CD8-positive, alpha-beta T cell (primary cell): ENCODE measurements at regions of chr2 and their contacts with region 1.

Region 1: DNA sequence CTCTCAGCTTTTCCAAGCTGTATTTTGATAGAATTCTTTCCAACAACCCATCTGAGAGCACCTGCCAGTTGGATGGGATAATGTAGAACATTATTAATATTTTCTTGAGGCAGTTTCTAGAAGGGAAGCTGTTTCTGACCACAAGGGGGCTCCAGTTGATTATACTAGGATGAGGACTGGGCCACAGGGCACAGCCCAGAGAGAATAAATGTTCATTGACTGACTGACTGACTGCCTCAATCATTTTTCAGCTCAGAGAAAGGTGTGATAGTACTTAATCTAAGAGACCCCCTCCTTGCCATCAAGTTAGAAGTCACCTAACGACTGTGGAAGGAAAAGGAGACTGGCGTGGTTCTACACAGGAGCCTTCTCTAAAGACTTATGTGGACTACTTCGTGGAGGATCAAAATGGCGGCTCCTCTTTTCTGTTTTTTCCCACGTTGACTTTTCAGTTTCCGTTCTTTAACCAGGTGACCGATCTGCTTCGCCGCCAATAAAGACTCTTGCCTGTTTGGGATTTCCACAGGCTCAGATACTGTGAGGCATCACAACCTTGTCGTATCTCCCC is 31.9 kb upstream of the CREG2 start:
- DNase-seq: peak; percentile 11 to 78 (median 63)
- ATAC-seq: peak; percentile 71
- H3K4me3 ChIP-seq: no peak overlapping the region
- H3K4me3 Mint-ChIP-seq: no peak overlapping the region
- H3K27ac ChIP-seq: no peak overlapping the region
- H3K27ac Mint-ChIP-seq: no peak overlapping the region
- H3K4me1 ChIP-seq: no peaks in the 10 kb centered on the region
- H3K4me1 Mint-ChIP-seq: no peaks in the 10 kb centered on the region
- H3K27me3 ChIP-seq: no peaks in the 10 kb centered on the region
- H3K27me3 Mint-ChIP-seq: no peaks in the 10 kb centered on the region
- CTCF ChIP-seq: peak; percentile 82

Region 2: DNA sequence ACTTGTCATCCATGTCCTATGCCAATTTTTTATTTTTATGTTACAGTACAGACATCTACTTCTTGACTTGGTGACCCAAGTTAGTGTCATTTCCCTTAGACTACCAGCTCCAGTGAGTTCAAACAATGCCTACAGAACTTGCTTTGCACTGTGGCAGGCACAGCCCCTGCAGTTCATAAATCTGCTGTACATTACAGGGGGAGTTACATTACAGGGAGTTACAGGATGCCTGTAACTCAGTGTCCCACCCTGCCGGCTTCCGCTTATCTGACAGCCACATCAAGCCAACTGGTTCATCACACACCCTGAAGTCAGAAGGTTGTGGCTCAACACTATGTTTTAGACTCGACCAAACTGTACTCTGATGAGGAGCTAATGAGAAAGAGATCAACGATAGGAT is 607.1 kb before region 1 on chr2:
- CTCF ChIA-PET with region 1: no interaction called
- POLR2A ChIA-PET with region 1: no interaction called
- intact Hi-C with region 1: no loop called
- DNase-seq: peak in 7 of 9 experiments; percentile 7 to 64 (median 41)
- ATAC-seq: peak; percentile 88
- H3K4me3 ChIP-seq: no peak overlapping the region
- H3K4me3 Mint-ChIP-seq: peak overlapping the region; percentile 44
- H3K27ac ChIP-seq: peak overlapping the region in 1 of 2 experiments; percentile 33
- H3K27ac Mint-ChIP-seq: peak overlapping the region; percentile 80
- H3K4me1 ChIP-seq: peaks cover 37% of the 10 kb centered on the region
- H3K4me1 Mint-ChIP-seq: peaks cover 35% of the 10 kb centered on the region
- H3K27me3 ChIP-seq: no peaks in the 10 kb centered on the region
- H3K27me3 Mint-ChIP-seq: no peaks in the 10 kb centered on the region
- CTCF ChIP-seq: no peak

Region 3: GRCh38 chr2:101306410-101306809 is 112.8 kb before region 1 on chr2:
- CTCF ChIA-PET with region 1: no interaction called
- POLR2A ChIA-PET with region 1: no interaction called
- intact Hi-C with region 1: no loop called
- DNase-seq: peak in 1 of 9 experiments; percentile 40
- ATAC-seq: no peak
- H3K4me3 ChIP-seq: peak overlapping the region; percentile 75 to 88
- H3K4me3 Mint-ChIP-seq: peak overlapping the region; percentile 92
- H3K27ac ChIP-seq: peak overlapping the region; percentile 81 to 90
- H3K27ac Mint-ChIP-seq: peak overlapping the region; percentile 99
- H3K4me1 ChIP-seq: peaks cover 66% of the 10 kb centered on the region
- H3K4me1 Mint-ChIP-seq: peaks cover 81% of the 10 kb centered on the region
- H3K27me3 ChIP-seq: no peaks in the 10 kb centered on the region
- H3K27me3 Mint-ChIP-seq: no peaks in the 10 kb centered on the region
- CTCF ChIP-seq: no peak

Region 4: DNA sequence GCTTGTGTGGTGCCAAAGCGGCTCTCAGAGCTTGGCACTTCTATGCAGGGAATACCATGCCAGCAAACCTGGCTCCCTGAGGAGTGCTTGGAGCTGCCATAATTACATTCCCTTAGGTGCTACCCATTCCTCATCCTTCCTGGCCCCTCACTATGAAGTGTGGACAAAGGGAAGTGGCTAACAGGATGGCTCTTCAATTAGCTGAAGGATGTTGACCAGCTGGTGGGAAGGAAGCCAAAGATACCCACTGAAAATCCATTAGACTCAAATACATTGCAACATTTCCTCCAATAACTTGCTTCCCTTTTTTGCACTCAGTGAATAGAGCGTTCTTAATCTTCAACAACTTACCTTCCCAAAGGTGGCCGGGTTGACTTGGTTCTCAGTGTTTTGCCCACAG is 47.2 kb after region 1 on chr2:
- CTCF ChIA-PET with region 1: no interaction called
- POLR2A ChIA-PET with region 1: no interaction called
- intact Hi-C with region 1: no loop called
- DNase-seq: no peak
- ATAC-seq: no peak
- H3K4me3 ChIP-seq: no peak overlapping the region
- H3K4me3 Mint-ChIP-seq: no peak overlapping the region
- H3K27ac ChIP-seq: no peak overlapping the region
- H3K27ac Mint-ChIP-seq: no peak overlapping the region
- H3K4me1 ChIP-seq: no peaks in the 10 kb centered on the region
- H3K4me1 Mint-ChIP-seq: no peaks in the 10 kb centered on the region
- H3K27me3 ChIP-seq: no peaks in the 10 kb centered on the region
- H3K27me3 Mint-ChIP-seq: no peaks in the 10 kb centered on the region
- CTCF ChIP-seq: no peak

Region 5: GRCh38 chr2:101725515-101726192 is 306.5 kb after region 1 on chr2:
- CTCF ChIA-PET with region 1: interaction called, 22 read pairs
- POLR2A ChIA-PET with region 1: no interaction called
- intact Hi-C with region 1: loop called (anchors 1 to 2 kb)
- DNase-seq: peak in 2 of 9 experiments; percentile 48 to 62
- ATAC-seq: peak; percentile 28
- H3K4me3 ChIP-seq: no peak overlapping the region
- H3K4me3 Mint-ChIP-seq: no peak overlapping the region
- H3K27ac ChIP-seq: no peak overlapping the region
- H3K27ac Mint-ChIP-seq: peak overlapping the region; percentile 38
- H3K4me1 ChIP-seq: peaks cover 88% of the 10 kb centered on the region
- H3K4me1 Mint-ChIP-seq: peaks cover 92% of the 10 kb centered on the region
- H3K27me3 ChIP-seq: no peaks in the 10 kb centered on the region
- H3K27me3 Mint-ChIP-seq: no peaks in the 10 kb centered on the region
- CTCF ChIP-seq: peak; percentile 39

Region 6: DNA sequence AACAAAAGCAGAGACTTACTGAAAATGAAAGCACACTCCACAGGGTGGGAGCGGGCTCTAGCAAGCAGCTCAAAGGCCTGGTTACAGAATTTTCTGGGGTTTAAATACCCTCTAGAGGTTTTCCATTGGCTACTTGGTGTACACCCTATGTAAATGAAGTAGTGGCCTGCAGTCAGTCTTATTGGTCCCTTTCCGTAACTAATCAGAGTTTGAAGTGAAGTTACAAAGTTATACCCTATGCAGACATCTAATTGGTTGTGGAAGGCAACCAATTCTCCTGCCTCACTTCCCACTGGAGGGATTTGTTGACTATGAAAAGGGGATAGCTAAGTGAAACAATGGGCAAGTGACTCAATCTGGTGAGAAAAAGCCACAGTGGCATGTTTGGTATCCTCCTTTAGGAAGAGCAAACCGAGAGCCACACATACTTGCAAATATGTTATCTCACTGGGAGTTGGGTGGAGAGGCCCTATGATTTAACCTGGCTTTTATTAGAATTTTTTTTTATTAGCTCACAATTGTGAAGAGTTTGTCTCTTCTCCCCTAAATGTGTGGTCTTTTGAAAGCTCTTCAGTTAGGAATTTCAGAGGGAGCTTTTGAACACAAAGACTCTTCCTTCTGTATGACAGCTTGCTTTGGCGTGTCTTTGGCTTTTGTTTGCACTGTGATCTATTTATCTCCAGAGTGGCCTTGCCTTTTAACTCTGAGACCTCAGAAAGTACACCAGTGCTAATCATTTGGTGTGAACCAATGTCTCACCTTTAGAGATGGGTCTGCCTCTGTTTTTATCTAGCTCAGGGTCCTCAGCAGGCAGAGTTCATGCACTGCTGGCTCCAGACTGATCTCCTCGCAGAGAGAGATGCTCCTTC is 347.9 kb after region 1 on chr2:
- CTCF ChIA-PET with region 1: interaction called, 14 read pairs
- POLR2A ChIA-PET with region 1: no interaction called
- intact Hi-C with region 1: no loop called
- DNase-seq: no peak
- ATAC-seq: no peak
- H3K4me3 ChIP-seq: no peak overlapping the region
- H3K4me3 Mint-ChIP-seq: peak overlapping the region; percentile 36
- H3K27ac ChIP-seq: no peak overlapping the region
- H3K27ac Mint-ChIP-seq: peak overlapping the region; percentile 74
- H3K4me1 ChIP-seq: peaks cover 79% of the 10 kb centered on the region
- H3K4me1 Mint-ChIP-seq: peaks cover 96% of the 10 kb centered on the region
- H3K27me3 ChIP-seq: no peaks in the 10 kb centered on the region
- H3K27me3 Mint-ChIP-seq: no peaks in the 10 kb centered on the region
- CTCF ChIP-seq: no peak

Region 7: DNA sequence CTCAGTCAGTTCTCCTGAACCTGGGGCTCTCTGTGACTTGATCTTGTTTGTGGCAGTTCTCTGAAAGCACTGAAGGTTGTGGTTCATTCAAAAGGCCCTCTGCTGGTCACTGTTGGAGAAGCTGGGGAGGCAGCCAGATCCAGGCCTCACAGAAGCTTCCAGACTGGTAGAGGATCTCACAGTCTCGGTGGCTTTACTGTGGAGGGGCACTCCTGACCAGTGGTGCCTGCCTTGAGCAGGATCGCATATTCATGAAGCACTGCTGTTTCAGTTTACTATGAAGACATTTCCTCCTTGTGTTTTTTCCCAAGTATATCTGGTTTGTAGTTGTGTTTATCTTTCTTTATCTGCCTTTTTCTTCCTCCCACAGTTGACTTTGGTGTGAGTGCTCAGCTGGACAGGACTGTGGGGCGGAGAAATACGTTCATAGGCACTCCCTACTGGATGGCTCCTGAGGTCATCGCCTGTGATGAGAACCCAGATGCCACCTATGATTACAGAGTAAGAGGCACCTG is 412.2 kb after region 1 on chr2:
- CTCF ChIA-PET with region 1: interaction called, 138 read pairs
- POLR2A ChIA-PET with region 1: interaction called, 3 read pairs
- intact Hi-C with region 1: loop called (anchors 1 kb)
- DNase-seq: peak; percentile 30 to 75 (median 62)
- ATAC-seq: peak; percentile 67
- H3K4me3 ChIP-seq: no peak overlapping the region
- H3K4me3 Mint-ChIP-seq: no peak overlapping the region
- H3K27ac ChIP-seq: no peak overlapping the region
- H3K27ac Mint-ChIP-seq: peak overlapping the region; percentile 5
- H3K4me1 ChIP-seq: peaks cover 47% of the 10 kb centered on the region
- H3K4me1 Mint-ChIP-seq: peaks cover 52% of the 10 kb centered on the region
- H3K27me3 ChIP-seq: no peaks in the 10 kb centered on the region
- H3K27me3 Mint-ChIP-seq: no peaks in the 10 kb centered on the region
- CTCF ChIP-seq: peak; percentile 42

Region 8: GRCh38 chr2:101873543-101873942 is 454.4 kb after region 1 on chr2:
- CTCF ChIA-PET with region 1: no interaction called
- POLR2A ChIA-PET with region 1: interaction called, 3 read pairs
- intact Hi-C with region 1: loop called (anchors 1 to 5 kb)
- DNase-seq: peak in 1 of 9 experiments; percentile 20
- ATAC-seq: no peak
- H3K4me3 ChIP-seq: no peak overlapping the region
- H3K4me3 Mint-ChIP-seq: no peak overlapping the region
- H3K27ac ChIP-seq: no peak overlapping the region
- H3K27ac Mint-ChIP-seq: peak overlapping the region; percentile 46
- H3K4me1 ChIP-seq: no peaks in the 10 kb centered on the region
- H3K4me1 Mint-ChIP-seq: no peaks in the 10 kb centered on the region
- H3K27me3 ChIP-seq: no peaks in the 10 kb centered on the region
- H3K27me3 Mint-ChIP-seq: no peaks in the 10 kb centered on the region
- CTCF ChIP-seq: no peak

Region 9: DNA sequence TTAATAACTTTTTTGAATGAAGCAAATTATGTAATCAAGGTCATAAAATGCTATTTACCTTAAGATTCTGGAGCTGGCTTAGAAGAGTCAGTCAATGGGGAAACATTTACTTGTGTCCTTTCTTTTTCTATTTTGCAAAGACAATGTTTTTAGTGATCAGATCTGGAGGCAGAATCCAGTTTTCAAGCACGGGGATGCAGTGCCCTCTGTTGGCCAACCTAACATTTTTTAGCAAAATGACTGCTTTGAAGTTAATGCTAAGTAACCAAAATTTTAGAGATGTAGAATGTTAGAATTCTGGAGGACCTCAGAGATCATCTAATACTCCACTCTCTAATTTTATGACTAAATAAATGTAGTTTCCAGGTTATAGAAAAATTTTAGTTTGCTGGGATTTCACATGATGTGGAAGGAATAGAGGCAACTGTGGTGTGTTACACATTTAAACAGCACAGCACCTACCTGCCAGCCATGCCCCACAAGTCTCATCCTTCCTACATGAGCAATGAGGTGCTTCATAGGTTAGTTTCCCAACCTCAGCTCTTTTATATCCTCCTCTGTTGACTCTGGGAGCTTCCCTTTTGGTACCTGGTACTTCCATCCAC is 1030.3 kb after region 1 on chr2:
- CTCF ChIA-PET with region 1: no interaction called
- POLR2A ChIA-PET with region 1: no interaction called
- intact Hi-C with region 1: loop called in 1 of 2 experiments (anchors 5 kb)
- DNase-seq: peak; percentile 36 to 74 (median 61)
- ATAC-seq: no peak
- H3K4me3 ChIP-seq: no peak overlapping the region
- H3K4me3 Mint-ChIP-seq: no peak overlapping the region
- H3K27ac ChIP-seq: no peak overlapping the region
- H3K27ac Mint-ChIP-seq: no peak overlapping the region
- H3K4me1 ChIP-seq: no peaks in the 10 kb centered on the region
- H3K4me1 Mint-ChIP-seq: peaks cover 3% of the 10 kb centered on the region
- H3K27me3 ChIP-seq: no peaks in the 10 kb centered on the region
- H3K27me3 Mint-ChIP-seq: no peaks in the 10 kb centered on the region
- CTCF ChIP-seq: peak; percentile 71